Activated CD4-positive, alpha-beta T cell treated with anti-CD3 and anti-CD28 coated beads, Interleukin-2, amount 10 ng/mL, durations not matched to agents 24 days and 14 days (primary cell): ENCODE measurements at regions of chr10 and their contacts with region 1.

Region 1: DNA sequence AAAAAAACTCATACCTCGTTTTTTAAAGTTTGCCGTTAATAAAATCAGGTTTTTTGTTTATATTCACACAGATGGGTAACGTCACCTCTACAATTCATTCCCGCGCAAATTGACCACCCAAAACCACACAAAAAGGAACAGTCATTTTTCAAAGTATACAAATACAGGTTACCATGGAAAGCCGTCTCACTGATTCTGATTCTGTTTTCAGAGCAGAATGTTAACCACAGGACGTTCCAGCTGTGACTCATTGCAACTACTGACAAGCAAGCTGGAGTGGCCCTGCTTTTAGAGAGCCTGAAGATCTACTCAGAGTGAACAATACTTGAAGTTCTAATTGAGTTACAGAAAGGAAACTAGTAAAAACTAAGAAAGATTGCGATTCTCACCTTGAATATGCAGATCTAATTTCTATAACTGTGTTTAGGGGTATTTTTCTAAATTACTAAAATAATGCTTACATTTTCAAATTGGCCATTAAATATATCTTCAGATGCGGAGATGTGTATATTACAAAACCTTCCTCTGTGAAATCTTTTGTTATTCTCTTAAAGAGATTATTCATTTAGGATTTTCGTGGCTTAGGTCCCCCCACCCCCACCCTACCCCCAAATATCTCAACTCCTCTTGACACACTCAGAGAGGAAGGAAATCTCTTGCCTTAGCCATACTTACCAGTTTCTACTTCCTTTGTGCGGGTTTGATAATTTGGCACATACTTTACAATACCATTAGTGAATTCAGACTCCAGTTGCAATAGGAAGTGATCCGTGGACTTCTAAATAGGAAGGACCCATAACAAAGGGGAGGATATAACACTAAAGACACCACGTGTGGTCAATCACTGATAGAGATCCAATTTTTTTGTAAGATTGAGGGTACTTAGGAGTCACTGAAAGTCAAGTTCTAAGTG is 106.0 kb downstream of the CUBN start:
- DNase-seq: peak; percentile 94
- H3K4me3 Mint-ChIP-seq: peak overlapping the region; percentile 59
- H3K27ac Mint-ChIP-seq: peak overlapping the region; percentile 94
- H3K4me1 Mint-ChIP-seq: peaks cover 39% of the 10 kb centered on the region
- H3K27me3 Mint-ChIP-seq: peaks cover 5% of the 10 kb centered on the region

Region 2: GRCh38 chr10:16817125-16818019 is 206.3 kb before region 1 on chr10 and contains the start of gene RSU1:
- intact Hi-C with region 1: loop called (anchors 2 kb)
- DNase-seq: peak; percentile 100
- H3K4me3 Mint-ChIP-seq: peak within 1 kb of the TSS; percentile 98
- H3K27ac Mint-ChIP-seq: peak within 1 kb of the TSS; percentile 97
- H3K4me1 Mint-ChIP-seq: peaks cover 31% of the 10 kb centered on the region
- H3K27me3 Mint-ChIP-seq: peaks cover 10% of the 10 kb centered on the region
- total RNA-seq, gene RSU1: 44.5 and 47.4 TPM in 2 replicates

Region 3: GRCh38 chr10:16853201-16853600 is 170.4 kb before region 1 on chr10:
- intact Hi-C with region 1: no loop called
- DNase-seq: no peak
- H3K4me3 Mint-ChIP-seq: no peak overlapping the region
- H3K27ac Mint-ChIP-seq: no peak overlapping the region
- H3K4me1 Mint-ChIP-seq: no peaks in the 10 kb centered on the region
- H3K27me3 Mint-ChIP-seq: peaks cover 7% of the 10 kb centered on the region

Region 4: DNA sequence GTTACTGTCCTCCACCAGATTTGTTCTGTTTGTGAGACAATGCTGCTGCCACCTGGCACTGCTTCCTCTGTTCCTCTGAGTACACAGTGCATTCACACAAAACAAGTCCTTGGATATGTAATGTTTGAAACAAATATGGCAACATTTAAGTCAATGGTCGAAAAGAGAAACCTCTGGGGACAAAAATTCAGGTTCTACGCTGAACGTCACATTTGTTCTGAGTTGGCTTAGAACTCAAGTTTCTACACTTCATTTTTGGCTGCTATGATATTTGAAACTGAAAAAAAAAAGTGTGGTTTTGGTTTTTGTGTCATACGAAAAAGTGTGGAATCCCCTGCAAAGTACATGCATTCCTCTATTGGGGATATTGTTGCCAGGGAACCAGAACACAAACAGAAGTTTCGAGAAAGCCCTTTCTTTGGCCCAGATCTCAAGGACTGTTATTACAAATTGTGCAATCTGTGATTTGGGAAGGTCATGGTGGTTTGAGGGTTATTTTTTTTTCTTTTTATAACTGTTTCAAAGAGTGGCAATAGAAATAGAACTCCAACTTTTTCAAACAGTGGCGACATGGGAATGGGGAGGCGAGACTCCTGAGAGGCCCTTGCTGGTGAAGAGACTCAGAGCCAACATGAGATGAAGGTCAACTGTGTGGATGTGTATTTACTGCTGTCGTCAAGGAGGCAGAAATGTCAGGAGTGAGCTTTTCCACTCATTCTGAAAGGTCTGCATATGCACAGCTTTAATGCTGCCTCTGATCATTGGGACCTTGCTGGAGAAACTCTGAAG is 21.5 kb before region 1 on chr10:
- intact Hi-C with region 1: loop called (anchors 1 kb)
- DNase-seq: peak; percentile 89
- H3K4me3 Mint-ChIP-seq: peak overlapping the region; percentile 71
- H3K27ac Mint-ChIP-seq: peak overlapping the region; percentile 95
- H3K4me1 Mint-ChIP-seq: peaks cover 33% of the 10 kb centered on the region
- H3K27me3 Mint-ChIP-seq: peaks cover 57% of the 10 kb centered on the region

Region 5: GRCh38 chr10:17216217-17216900 is 192.7 kb after region 1 on chr10:
- intact Hi-C with region 1: loop called (anchors 1 kb)
- DNase-seq: peak; percentile 86
- H3K4me3 Mint-ChIP-seq: peak overlapping the region; percentile 8
- H3K27ac Mint-ChIP-seq: peak overlapping the region; percentile 88
- H3K4me1 Mint-ChIP-seq: peaks cover 32% of the 10 kb centered on the region
- H3K27me3 Mint-ChIP-seq: no peaks in the 10 kb centered on the region

Region 6: GRCh38 chr10:17233286-17233991 is 209.8 kb after region 1 on chr10:
- intact Hi-C with region 1: loop called (anchors 1 kb)
- DNase-seq: no peak
- H3K4me3 Mint-ChIP-seq: peak overlapping the region; percentile 9
- H3K27ac Mint-ChIP-seq: no peak overlapping the region
- H3K4me1 Mint-ChIP-seq: peaks cover 39% of the 10 kb centered on the region
- H3K27me3 Mint-ChIP-seq: no peaks in the 10 kb centered on the region

Region 7: GRCh38 chr10:17961551-17962422 is 938.1 kb after region 1 on chr10:
- intact Hi-C with region 1: no loop called
- DNase-seq: no peak
- H3K4me3 Mint-ChIP-seq: no peak overlapping the region
- H3K27ac Mint-ChIP-seq: no peak overlapping the region
- H3K4me1 Mint-ChIP-seq: no peaks in the 10 kb centered on the region
- H3K27me3 Mint-ChIP-seq: no peaks in the 10 kb centered on the region

Region 8: GRCh38 chr10:18659120-18659818 is 1635.6 kb after region 1 on chr10 and contains the start of gene ARL5B:
- intact Hi-C with region 1: loop called (anchors 10 kb)
- DNase-seq: peak; percentile 98
- H3K4me3 Mint-ChIP-seq: peak within 1 kb of the TSS; percentile 96
- H3K27ac Mint-ChIP-seq: peak within 1 kb of the TSS; percentile 97
- H3K4me1 Mint-ChIP-seq: peaks cover 35% of the 10 kb centered on the region
- H3K27me3 Mint-ChIP-seq: no peaks in the 10 kb centered on the region
- total RNA-seq, gene ARL5B: 17.0 and 17.5 TPM in 2 replicates